Activated CD8-positive, alpha-beta T cell treated with anti-CD3 and anti-CD28 coated beads for 36 hours (primary cell): ENCODE measurements at regions of chr6 and their contacts with region 1.

Region 1: GRCh38 chr6:131914967-131915751 is 36.0 kb downstream of the CCN2 start:
- DNase-seq: peak; percentile 79
- ATAC-seq: peak; percentile 73
- H3K4me3 Mint-ChIP-seq: no peak overlapping the region
- H3K27ac Mint-ChIP-seq: no peak overlapping the region
- H3K4me1 Mint-ChIP-seq: peaks cover 16% of the 10 kb centered on the region
- H3K27me3 Mint-ChIP-seq: peaks cover 52% of the 10 kb centered on the region
- CTCF ChIP-seq: peak; percentile 73

Region 2: GRCh38 chr6:131929264-131929663 is 14.1 kb after region 1 on chr6:
- CTCF ChIA-PET with region 1: interaction called, 38 read pairs
- POLR2A ChIA-PET with region 1: no interaction called
- intact Hi-C with region 1: no loop called
- DNase-seq: no peak
- ATAC-seq: no peak
- H3K4me3 Mint-ChIP-seq: no peak overlapping the region
- H3K27ac Mint-ChIP-seq: no peak overlapping the region
- H3K4me1 Mint-ChIP-seq: no peaks in the 10 kb centered on the region
- H3K27me3 Mint-ChIP-seq: peaks cover 4% of the 10 kb centered on the region
- CTCF ChIP-seq: no peak

Region 3: GRCh38 chr6:132218059-132218696 is 303.0 kb after region 1 on chr6:
- CTCF ChIA-PET with region 1: interaction called, 12 read pairs
- POLR2A ChIA-PET with region 1: no interaction called
- intact Hi-C with region 1: loop called (anchors 2 kb)
- DNase-seq: no peak
- ATAC-seq: no peak
- H3K4me3 Mint-ChIP-seq: no peak overlapping the region
- H3K27ac Mint-ChIP-seq: no peak overlapping the region
- H3K4me1 Mint-ChIP-seq: no peaks in the 10 kb centered on the region
- H3K27me3 Mint-ChIP-seq: peaks cover 3% of the 10 kb centered on the region
- CTCF ChIP-seq: peak; percentile 44